Prostate gland (tissue), 2 donors: ENCODE measurements at regions of chr9 and their contacts with region 1.

Region 1: DNA sequence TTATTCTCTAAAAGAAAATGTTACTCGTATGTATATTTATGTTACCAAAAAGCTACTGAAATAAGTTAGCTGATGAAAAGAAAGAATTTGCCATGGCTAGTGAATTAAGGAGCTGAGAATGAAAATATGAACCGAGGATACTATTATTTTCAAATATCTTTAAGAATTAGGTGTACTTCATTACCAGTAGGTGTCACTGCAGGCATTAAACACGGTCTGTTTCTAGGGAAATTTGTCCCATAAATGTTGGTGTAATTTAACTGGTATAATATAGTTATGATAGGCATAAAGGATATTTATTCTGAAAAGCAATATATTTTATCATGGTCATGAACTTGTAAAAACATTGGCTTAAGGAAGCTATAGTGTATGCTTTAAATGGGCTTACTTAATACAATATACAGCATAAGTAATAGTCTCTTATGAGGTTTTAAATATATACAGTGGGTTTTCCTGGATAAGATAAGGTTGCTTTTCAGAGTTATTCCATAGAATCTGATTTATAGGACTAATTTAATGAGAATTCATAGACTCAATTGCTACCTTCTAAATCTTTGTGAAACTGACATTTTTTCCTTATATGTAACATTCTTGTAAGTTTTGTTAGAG is 72.4 kb upstream of the MPDZ start:
- DNase-seq: peak; percentile 6
- H3K4me3 ChIP-seq: no peak overlapping the region
- H3K27ac ChIP-seq: no peak overlapping the region
- H3K4me1 ChIP-seq: no peaks in the 10 kb centered on the region
- H3K27me3 ChIP-seq: no peaks in the 10 kb centered on the region
- CTCF ChIP-seq: peak in 3 of 4 experiments; percentile 48 to 68 (median 66)
- POLR2A ChIP-seq: no peak

Region 2: DNA sequence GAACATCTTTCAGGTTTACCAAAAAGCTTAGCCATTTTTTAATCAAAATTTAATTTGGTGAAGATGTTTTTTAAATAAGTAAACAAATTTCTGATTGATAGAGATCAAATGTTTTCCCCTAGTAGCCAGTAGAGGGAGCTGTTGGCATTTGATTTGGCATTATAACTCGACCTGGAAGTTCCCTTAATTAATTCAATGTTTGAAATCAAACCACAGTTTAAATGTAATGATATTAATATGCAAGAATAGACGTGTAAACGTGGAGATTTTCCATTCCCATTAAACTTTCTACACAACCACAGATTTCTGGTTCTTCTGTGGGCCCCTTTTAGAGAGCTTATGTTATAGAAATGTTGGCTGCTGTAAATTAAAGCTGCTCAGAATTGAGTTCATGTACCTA is 75.7 kb after region 1 on chr9:
- intact Hi-C with region 1: loop called (anchors 5 kb)
- DNase-seq: peak; percentile 45
- H3K4me3 ChIP-seq: no peak overlapping the region
- H3K27ac ChIP-seq: no peak overlapping the region
- H3K4me1 ChIP-seq: no peaks in the 10 kb centered on the region
- H3K27me3 ChIP-seq: no peaks in the 10 kb centered on the region
- CTCF ChIP-seq: peak; percentile 50 to 88 (median 80)
- POLR2A ChIP-seq: no peak

Region 3: DNA sequence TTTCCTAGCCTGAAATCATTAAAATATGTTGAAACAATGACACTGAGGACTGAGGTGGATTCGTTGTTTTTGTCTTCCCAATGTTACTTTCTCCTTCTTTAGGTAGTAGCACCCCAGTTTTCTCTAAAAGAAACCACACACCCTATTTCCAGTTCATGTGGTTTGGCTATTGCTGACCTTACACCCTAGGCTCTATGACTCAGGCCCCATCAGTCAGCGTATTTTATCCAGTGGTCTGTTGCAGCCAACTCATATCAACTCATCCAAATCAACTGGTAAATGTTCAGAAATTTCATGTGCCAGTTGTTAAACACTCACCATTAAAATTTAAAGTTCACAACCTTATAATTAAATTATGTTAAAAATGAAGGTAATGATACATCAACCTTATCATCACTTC is 1006.6 kb after region 1 on chr9:
- intact Hi-C with region 1: loop called (anchors 5 kb)
- DNase-seq: no peak
- H3K4me3 ChIP-seq: no peak overlapping the region
- H3K27ac ChIP-seq: no peak overlapping the region
- H3K4me1 ChIP-seq: no peaks in the 10 kb centered on the region
- H3K27me3 ChIP-seq: no peaks in the 10 kb centered on the region
- CTCF ChIP-seq: no peak
- POLR2A ChIP-seq: no peak

Region 4: DNA sequence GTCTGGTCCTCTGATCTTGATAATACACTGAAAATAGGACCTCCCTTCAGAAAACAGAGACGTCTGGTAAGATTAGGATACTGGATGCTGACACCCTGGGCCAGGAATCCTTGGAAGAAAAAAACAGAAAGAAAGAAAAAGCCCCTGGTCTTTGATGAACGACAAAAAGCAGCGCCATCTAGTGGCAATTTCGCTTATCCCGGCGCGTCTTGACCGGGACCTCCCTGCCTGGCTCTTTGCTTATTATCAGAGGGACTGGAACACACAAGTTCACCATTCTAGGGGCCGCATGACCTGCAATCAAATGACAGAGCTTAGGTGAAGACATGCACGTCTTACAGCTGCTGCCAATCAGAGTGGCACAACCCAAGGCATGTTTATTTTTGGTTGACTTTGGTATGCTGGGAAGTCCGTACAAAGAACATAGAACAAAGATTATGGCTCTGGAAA is 1076.9 kb after region 1 on chr9:
- intact Hi-C with region 1: loop called (anchors 10 kb)
- DNase-seq: peak; percentile 73
- H3K4me3 ChIP-seq: no peak overlapping the region
- H3K27ac ChIP-seq: no peak overlapping the region
- H3K4me1 ChIP-seq: no peaks in the 10 kb centered on the region
- H3K27me3 ChIP-seq: no peaks in the 10 kb centered on the region
- CTCF ChIP-seq: peak; percentile 61 to 77 (median 64)
- POLR2A ChIP-seq: no peak